Dendritic cell treated with granulocyte-macrophage colony-stimulating factor and Interleukin-4, amounts not matched to agents 40 ng/mL and 50 ng/mL, for 4 days (primary cell): ENCODE measurements at regions of chr1 and their contacts with region 1.

Region 1: DNA sequence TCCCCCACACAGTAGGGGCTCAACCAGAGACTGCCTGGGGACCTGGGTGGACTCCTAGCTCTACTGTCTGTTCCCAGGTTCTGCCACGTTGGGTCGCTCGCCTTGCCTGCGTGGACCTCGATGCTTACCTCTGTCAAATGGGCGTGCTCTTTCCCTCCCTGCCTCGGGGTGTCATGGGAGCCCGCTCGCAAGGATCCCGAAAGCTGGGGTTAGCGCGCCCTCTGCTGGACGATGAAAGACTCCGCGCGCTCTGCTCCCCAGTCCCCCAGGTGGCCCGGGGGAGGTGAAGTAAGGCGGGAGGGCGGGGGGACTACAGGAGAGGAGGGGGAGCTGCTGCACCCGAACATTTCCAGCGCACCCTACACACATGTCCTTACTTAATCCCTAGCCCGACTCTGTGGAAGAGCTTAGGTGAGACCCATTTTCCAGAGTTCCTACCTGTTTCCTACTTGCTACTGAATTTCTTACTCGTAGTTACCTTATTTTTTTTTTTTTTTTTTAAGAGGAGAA is 2.3 kb upstream of the BSND start:
- H3K4me3 Mint-ChIP-seq: no peak overlapping the region
- H3K27ac Mint-ChIP-seq: no peak overlapping the region
- H3K4me1 Mint-ChIP-seq: peaks cover 12% of the 10 kb centered on the region
- H3K27me3 Mint-ChIP-seq: peaks cover 50% of the 10 kb centered on the region

Region 2: GRCh38 chr1:54810100-54810942 is 186.1 kb before region 1 on chr1:
- intact Hi-C with region 1: no loop called
- H3K4me3 Mint-ChIP-seq: no peak overlapping the region
- H3K27ac Mint-ChIP-seq: no peak overlapping the region
- H3K4me1 Mint-ChIP-seq: peaks cover 10% of the 10 kb centered on the region
- H3K27me3 Mint-ChIP-seq: peaks cover 1% of the 10 kb centered on the region

Region 3: DNA sequence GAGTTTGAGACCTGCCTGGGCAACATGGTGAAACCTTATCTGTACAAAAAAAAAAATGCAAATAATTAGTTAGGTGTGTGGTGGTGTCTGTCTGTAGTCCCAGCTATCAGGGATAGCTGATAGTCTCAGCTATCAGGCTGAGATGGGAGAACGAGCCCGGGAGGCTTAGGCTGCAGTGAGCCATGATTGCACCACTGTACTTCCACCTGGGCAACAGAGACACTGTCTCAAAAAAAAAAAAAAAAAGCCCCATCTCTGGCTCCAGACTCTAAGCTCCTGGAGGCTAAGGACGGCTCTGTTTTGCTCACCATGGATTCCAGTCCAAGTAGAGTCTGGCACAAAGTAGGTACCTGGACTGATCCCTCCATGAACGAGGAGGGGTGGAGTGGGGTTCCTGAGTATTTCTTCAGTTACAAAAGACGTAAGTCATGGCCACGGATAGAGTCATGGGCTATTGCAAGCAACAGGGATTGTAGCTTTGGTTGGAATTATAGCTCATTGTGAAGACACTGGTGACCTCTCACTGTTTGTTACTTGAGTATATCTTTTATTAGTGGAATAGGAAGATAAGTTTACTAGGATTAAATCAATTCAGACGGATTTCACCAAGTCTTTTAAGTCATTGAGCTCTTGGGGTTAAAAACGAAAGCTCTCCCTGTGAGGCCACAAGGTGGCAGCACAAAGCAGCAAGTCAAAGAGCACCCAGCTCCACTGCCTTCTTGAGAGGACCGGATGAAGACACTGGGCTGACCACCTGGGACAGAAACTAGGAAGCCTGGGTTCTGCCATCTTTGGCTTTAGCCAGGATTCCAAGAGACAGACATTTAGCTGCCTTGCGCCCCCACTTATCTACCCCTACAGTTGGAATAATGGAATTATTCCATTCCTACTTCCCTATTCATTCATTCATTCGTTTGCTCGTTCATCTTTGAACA is 51.5 kb before region 1 on chr1:
- intact Hi-C with region 1: loop called (anchors 1 kb)
- H3K4me3 Mint-ChIP-seq: no peak overlapping the region
- H3K27ac Mint-ChIP-seq: no peak overlapping the region
- H3K4me1 Mint-ChIP-seq: peaks cover 40% of the 10 kb centered on the region
- H3K27me3 Mint-ChIP-seq: peaks cover 10% of the 10 kb centered on the region

Region 4: DNA sequence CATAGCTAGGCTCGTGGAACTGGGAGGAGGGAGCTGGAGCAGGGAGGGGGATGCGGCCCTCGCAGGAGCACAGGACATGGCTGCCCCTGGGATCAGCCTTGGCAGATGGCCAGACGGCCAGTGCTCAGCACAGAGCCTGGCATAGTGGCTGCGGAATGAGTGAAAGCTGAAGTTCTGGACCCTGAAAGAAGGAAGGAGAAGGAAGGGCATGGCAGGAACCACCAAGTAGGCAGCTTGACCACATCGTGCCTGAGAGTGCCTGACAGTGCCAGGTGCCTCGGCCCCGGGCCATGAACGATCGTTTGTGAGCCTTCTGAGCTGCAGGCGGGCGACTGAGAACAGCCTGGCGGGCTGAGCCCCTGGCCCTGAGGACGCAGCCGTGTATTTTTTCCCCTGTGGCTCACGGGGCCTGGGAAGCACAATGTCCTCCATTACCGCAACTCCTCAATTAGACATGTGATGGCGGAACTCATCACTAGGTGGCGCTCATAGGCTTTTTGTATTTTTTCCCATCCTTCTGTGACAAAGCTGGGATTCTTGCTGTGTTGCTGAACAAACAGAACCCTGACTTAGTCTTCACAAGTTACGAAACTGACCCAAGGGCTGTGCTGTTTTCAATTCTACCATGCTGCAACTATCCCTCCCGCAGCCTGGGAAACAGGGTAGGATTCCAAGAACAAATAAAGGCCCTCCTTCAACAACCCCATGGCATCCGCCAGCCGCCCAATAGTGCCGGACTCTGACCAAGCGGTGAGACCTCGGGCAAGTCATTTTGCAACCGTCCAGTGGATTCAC is 45.8 kb before region 1 on chr1:
- intact Hi-C with region 1: loop called (anchors 1 kb)
- H3K4me3 Mint-ChIP-seq: no peak overlapping the region
- H3K27ac Mint-ChIP-seq: no peak overlapping the region
- H3K4me1 Mint-ChIP-seq: peaks cover 58% of the 10 kb centered on the region
- H3K27me3 Mint-ChIP-seq: peaks cover 3% of the 10 kb centered on the region